ENCODE measurements at regions of chr7 and their contacts with region 1.

Region 1: DNA sequence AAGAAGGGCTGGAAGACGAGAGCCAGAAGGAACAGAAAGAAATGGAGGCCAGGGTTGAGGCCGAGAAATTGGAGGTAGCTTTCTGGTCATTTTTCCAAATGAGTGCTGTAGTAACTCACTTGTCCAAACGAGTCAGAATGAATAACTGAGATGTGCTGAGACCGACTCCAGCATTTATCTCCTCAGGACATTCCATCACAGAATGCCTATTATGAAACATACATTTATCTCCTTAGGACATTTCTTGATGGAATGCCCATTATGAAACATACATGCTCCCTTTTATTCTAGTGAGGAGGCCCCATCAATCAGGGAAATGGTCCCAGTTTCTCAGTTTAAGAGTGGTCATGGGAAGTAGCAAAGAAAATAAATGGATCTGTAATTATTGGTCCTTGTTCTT is 16.5 kb downstream of the AVL9 start:
- DNase-seq: no peak
- H3K4me3 ChIP-seq: no peak overlapping the region
- H3K27ac ChIP-seq: no peak overlapping the region
- H3K4me1 ChIP-seq: peaks cover 6 to 42% (median 21%) of the 10 kb centered on the region in 4 donors
- H3K27me3 ChIP-seq: no peaks in the 10 kb centered on the region
- CTCF ChIP-seq: no peak
- EP300 ChIP-seq: no peak
- POLR2A ChIP-seq: no peak

Region 2: GRCh38 chr7:32542595-32542994 is 30.8 kb after region 1 on chr7:
- in situ Hi-C with region 1: no loop called
- intact Hi-C with region 1: loop called (anchors 1 kb)
- DNase-seq: no peak
- H3K4me3 ChIP-seq: no peak overlapping the region
- H3K27ac ChIP-seq: no peak overlapping the region
- H3K4me1 ChIP-seq: no peaks in the 10 kb centered on the region
- H3K27me3 ChIP-seq: no peaks in the 10 kb centered on the region
- CTCF ChIP-seq: no peak
- EP300 ChIP-seq: no peak
- POLR2A ChIP-seq: no peak